ENCODE measurements at regions of chr10 and their contacts with region 1.

Region 1: GRCh38 chr10:29804025-29804852 is 169.5 kb upstream of the SVIL start:
- DNase-seq: peak; percentile 87
- H3K4me3 Mint-ChIP-seq: peak overlapping the region; percentile 33
- H3K27ac Mint-ChIP-seq: peak overlapping the region; percentile 90
- H3K4me1 Mint-ChIP-seq: peaks cover 54% of the 10 kb centered on the region
- H3K27me3 Mint-ChIP-seq: no peaks in the 10 kb centered on the region
- CTCF ChIP-seq: no peak

Region 2: GRCh38 chr10:29757551-29758297 is 46.5 kb before region 1 on chr10:
- CTCF ChIA-PET with region 1: interaction called, 5 read pairs
- intact Hi-C with region 1: loop called (anchors 5 kb)
- DNase-seq: peak; percentile 77
- H3K4me3 Mint-ChIP-seq: peak overlapping the region; percentile 49
- H3K27ac Mint-ChIP-seq: peak overlapping the region; percentile 91
- H3K4me1 Mint-ChIP-seq: peaks cover 43% of the 10 kb centered on the region
- H3K27me3 Mint-ChIP-seq: no peaks in the 10 kb centered on the region
- CTCF ChIP-seq: no peak

Region 3: DNA sequence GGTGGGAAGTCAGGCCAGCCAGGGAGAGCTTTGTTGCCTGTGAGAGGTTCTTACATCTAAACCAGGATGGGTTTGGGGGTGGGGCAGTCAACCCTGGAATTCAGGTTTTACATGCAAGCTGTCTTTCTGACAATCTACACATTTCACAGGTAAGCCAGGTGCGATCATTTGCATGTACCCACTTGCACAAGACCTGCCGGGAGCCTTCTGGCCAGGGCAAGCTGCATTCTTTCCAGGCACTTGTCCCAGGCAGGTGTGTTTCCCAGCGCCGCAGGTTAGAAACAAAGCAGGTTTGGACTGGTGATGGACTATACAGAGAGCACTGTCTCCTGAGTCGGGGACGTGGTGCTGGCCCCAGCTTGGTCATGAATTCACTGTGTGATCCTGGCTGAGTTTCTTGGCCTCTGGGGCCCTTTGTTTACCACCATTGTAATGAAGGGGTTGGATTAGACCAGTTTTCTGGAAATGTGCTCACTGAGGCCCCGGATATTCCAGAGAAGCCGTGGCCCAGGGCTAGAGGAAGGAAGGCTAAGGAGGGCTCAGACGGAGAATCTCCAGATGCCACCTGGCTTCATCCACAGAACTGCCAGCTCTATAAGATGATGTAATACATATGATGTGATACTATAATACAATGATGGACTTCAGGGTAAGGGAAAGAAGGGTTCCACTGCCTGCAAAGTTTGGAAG is 35.7 kb after region 1 on chr10:
- CTCF ChIA-PET with region 1: no interaction called
- intact Hi-C with region 1: no loop called
- DNase-seq: no peak
- H3K4me3 Mint-ChIP-seq: no peak overlapping the region
- H3K27ac Mint-ChIP-seq: no peak overlapping the region
- H3K4me1 Mint-ChIP-seq: peaks cover 25% of the 10 kb centered on the region
- H3K27me3 Mint-ChIP-seq: no peaks in the 10 kb centered on the region
- CTCF ChIP-seq: no peak

Region 4: GRCh38 chr10:29865700-29866340 is 61.6 kb after region 1 on chr10:
- CTCF ChIA-PET with region 1: interaction called, 3 read pairs
- intact Hi-C with region 1: loop called (anchors 2 kb)
- DNase-seq: peak; percentile 66
- H3K4me3 Mint-ChIP-seq: peak overlapping the region; percentile 33
- H3K27ac Mint-ChIP-seq: peak overlapping the region; percentile 92
- H3K4me1 Mint-ChIP-seq: peaks cover 42% of the 10 kb centered on the region
- H3K27me3 Mint-ChIP-seq: no peaks in the 10 kb centered on the region
- CTCF ChIP-seq: no peak

Measured in Calu3 (cell line).